Activated CD4-positive, alpha-beta memory T cell treated with anti-CD3 and anti-CD28 coated beads for 36 hours (primary cell): ENCODE measurements at regions of chr9 and their contacts with region 1.

Region 1: DNA sequence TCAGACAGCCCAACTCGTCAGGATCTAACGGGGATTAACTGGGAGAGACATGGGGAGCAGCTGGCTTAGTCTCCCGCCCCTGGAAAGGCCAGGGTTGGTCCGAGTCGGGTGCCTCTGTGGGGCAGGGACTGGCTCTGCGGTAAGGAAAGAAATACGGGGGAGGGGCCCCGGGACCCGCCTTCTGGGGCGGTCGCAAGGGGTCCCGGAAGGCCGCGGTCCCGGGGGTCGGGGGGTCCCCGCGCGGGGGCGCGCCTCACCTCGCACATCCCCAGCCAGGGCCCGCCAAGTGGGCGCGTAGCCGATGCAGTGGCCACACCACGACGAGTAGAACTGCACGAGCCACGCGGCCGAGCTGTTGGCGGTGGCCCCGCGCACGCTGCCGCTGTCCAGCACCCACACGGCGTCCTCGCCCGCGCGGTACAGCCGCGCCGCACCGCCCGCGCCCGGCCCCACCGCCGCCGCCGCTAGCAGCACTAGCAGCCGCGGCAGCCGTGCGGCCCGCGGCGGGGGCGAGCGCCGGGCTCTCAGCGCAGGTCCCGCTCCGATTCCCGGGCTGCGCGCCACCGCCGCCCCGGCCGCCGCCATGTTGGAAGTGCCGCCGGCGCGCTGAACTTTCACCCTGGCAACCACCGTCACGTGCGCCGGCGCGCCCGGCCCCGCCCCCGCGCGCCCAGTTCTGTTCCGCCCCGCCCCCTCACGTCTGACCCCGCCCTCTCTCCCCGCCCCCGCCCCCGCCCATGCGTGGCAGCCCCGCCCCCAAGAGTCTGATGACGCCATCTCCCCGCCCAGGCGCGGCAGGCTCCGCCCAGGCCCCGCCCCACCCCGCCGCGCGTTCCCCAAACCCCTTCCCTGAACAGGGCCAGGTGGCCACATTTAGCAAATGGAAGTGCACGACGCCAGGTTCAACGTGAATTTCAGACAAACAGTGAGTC is at the start of gene QSOX2:
- DNase-seq: peak; percentile 89
- H3K4me3 Mint-ChIP-seq: peak within 1 kb of the TSS; percentile 89
- H3K27ac Mint-ChIP-seq: peak within 1 kb of the TSS; percentile 92
- H3K4me1 Mint-ChIP-seq: peaks cover 35% of the 10 kb centered on the region
- H3K27me3 Mint-ChIP-seq: no peaks in the 10 kb centered on the region
- total RNA-seq, gene QSOX2: 19.0 to 19.4 TPM

Region 2: DNA sequence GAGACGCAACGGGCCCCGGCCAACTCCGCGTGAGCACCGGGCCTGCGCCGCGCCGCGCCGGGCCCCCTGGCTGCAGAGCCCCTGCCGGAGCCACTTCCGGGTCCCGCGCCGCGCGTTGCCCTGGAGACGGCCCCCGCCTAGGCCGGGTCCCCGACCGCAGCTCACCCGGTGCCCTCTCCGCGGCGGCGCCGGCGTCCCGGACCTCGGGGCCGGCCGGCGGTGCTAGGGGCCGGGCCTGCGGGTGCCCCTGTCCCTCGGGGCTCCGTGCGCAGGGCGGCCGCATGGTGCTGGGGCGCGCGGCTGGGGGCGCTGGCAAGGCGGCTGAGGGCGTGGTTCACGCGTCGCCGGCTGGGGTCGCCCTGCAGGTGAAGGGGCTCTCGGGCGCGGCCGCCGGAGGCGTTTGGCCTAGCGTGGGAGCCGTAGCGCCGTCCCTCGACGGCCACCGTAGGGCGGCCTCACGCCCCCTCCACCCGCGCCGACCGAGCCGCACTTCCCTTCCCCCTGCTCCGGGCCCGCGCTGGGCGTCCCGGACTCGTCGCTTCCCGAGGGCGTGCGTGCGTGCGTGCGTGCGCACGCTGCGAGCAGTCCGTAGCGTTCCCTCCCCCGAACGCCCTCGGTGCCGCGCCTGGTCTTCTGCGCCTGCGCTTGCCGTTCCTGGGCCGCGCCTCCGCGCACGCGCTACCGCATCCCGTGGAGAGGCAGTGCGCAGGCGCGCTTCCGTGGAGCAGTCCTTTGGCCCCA is 127.0 kb before region 1 on chr9 and contains the start of gene TMEM250:
- CTCF ChIA-PET with region 1: no interaction called
- POLR2A ChIA-PET with region 1: no interaction called
- intact Hi-C with region 1: loop called (anchors 5 kb)
- DNase-seq: peak; percentile 97
- H3K4me3 Mint-ChIP-seq: peak within 1 kb of the TSS; percentile 84
- H3K27ac Mint-ChIP-seq: peak within 1 kb of the TSS; percentile 87
- H3K4me1 Mint-ChIP-seq: peaks cover 30% of the 10 kb centered on the region
- H3K27me3 Mint-ChIP-seq: no peaks in the 10 kb centered on the region
- total RNA-seq, gene TMEM250: 28.0 to 28.4 TPM

Region 3: DNA sequence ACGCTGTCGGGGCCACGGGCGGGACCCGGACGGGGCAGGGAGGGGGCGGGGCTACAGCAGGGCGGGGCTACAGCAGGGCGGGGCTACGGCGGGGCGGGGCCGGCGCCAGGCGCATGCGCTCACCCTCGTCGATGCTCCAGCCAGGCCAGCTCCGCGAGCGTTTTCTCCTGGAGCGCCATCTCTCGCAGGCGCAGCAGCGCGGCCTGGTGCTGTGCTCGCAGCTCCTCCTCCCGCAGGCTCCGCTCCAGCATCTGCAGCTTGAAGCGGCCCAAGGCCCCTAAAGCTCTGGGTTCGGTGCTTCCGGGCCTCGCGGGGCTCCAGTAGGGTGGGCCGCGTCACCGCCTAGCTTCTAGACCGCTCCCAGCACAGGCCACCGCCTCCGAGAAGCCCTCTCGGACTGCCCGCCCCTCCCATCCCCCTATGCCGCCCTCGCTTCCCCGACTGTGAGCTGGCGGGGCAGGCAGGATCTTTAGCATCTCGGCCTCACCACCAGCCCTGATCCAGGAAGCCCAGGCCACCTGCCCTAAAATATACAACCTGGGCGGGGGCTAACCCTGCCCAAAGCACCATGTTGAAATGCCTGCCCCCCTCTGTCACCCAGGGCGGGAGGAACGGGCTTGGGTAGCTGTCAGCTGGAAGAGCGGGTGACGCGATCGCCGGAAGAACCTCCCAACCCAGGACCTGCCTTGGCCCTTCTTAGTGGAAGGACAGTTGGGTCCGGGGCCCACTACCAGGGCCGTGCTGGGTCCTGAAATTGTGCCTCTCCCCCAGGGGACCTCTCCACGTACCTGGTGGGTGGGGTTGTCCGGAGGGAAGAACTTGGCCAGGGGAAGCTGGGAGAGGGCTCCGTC is 22.0 kb after region 1 on chr9:
- CTCF ChIA-PET with region 1: interaction called, 6 read pairs
- POLR2A ChIA-PET with region 1: interaction called, 3 read pairs
- intact Hi-C with region 1: loop called (anchors 1 kb)
- DNase-seq: peak; percentile 91
- H3K4me3 Mint-ChIP-seq: peak overlapping the region; percentile 65
- H3K27ac Mint-ChIP-seq: peak overlapping the region; percentile 18
- H3K4me1 Mint-ChIP-seq: peaks cover 7% of the 10 kb centered on the region
- H3K27me3 Mint-ChIP-seq: no peaks in the 10 kb centered on the region

Region 4: DNA sequence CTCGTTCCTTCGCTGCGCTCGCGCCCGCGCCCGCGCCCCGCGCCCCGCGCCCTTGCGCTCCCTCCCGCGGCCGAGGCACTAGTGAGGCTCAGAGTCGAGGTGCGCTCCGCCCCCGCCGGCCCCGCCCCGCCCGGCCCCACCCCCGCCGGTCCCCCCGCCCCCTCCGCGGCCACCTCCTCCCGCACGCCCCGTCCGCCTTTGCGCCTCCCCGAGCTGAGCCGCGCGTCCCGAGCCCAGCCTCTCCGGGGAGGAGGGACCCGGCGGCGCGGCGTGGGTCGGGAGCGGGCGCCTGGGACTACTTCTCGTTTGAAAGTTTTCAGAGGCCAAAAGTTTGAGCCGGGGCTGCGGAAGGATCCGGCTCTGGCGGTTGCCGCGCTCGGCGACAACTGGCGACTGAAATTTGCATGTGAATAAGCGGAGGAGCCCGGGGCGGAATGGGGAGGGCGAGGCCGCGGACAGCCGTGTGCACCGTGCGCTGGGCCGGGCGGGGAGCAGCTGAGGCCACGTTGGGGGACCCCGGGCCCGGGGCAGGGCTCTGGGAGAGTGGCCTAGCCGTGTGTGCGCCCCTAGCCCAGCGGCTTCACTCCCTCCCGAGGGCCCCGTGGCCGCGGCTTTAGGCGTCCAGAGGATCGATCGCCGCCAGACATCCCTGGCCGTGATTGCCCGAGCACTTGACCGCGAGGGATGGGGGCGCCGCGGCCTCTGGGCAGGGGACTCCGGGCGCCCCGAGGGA is 300.6 kb after region 1 on chr9 and contains the start of gene NOTCH1:
- CTCF ChIA-PET with region 1: no interaction called
- POLR2A ChIA-PET with region 1: no interaction called
- intact Hi-C with region 1: loop called (anchors 10 kb)
- DNase-seq: peak; percentile 93
- H3K4me3 Mint-ChIP-seq: peak within 1 kb of the TSS; percentile 96
- H3K27ac Mint-ChIP-seq: peak within 1 kb of the TSS; percentile 94
- H3K4me1 Mint-ChIP-seq: peaks cover 45% of the 10 kb centered on the region
- H3K27me3 Mint-ChIP-seq: no peaks in the 10 kb centered on the region
- total RNA-seq, gene NOTCH1: 67.0 to 68.3 TPM